MCF 10A (cell line): ENCODE measurements at regions of chr6 and their contacts with region 1.

Region 1: GRCh38 chr6:83067448-83068413 is at the start of gene DOP1A:
- DNase-seq: peak; percentile 95
- H3K4me3 Mint-ChIP-seq: peak within 1 kb of the TSS; percentile 85
- H3K27ac Mint-ChIP-seq: peak within 1 kb of the TSS; percentile 17
- H3K4me1 Mint-ChIP-seq: peaks cover 22% of the 10 kb centered on the region
- H3K27me3 Mint-ChIP-seq: no peaks in the 10 kb centered on the region
- CTCF ChIP-seq: peak; percentile 94
- total RNA-seq, gene DOP1A: 25.8 and 31.3 TPM in 2 replicates

Region 2: GRCh38 chr6:82270881-82271645 is 796.7 kb before region 1 on chr6:
- CTCF ChIA-PET with region 1: interaction called, 37 read pairs
- POLR2A ChIA-PET with region 1: interaction called, 5 read pairs
- intact Hi-C with region 1: no loop called
- DNase-seq: peak; percentile 60
- H3K4me3 Mint-ChIP-seq: no peak overlapping the region
- H3K27ac Mint-ChIP-seq: no peak overlapping the region
- H3K4me1 Mint-ChIP-seq: peaks cover 9% of the 10 kb centered on the region
- H3K27me3 Mint-ChIP-seq: no peaks in the 10 kb centered on the region
- CTCF ChIP-seq: peak; percentile 55

Region 3: GRCh38 chr6:83051377-83052172 is 16.2 kb before region 1 on chr6:
- CTCF ChIA-PET with region 1: interaction called, 25 read pairs
- POLR2A ChIA-PET with region 1: interaction called, 5 read pairs
- intact Hi-C with region 1: no loop called
- DNase-seq: no peak
- H3K4me3 Mint-ChIP-seq: no peak overlapping the region
- H3K27ac Mint-ChIP-seq: no peak overlapping the region
- H3K4me1 Mint-ChIP-seq: no peaks in the 10 kb centered on the region
- H3K27me3 Mint-ChIP-seq: no peaks in the 10 kb centered on the region
- CTCF ChIP-seq: no peak

Region 4: GRCh38 chr6:83114164-83114563 is 46.4 kb after region 1 on chr6:
- CTCF ChIA-PET with region 1: interaction called, 96 read pairs
- POLR2A ChIA-PET with region 1: interaction called, 15 read pairs
- intact Hi-C with region 1: loop called (anchors 2 kb)
- DNase-seq: peak; percentile 43
- H3K4me3 Mint-ChIP-seq: no peak overlapping the region
- H3K27ac Mint-ChIP-seq: peak overlapping the region; percentile 47
- H3K4me1 Mint-ChIP-seq: peaks cover 6% of the 10 kb centered on the region
- H3K27me3 Mint-ChIP-seq: no peaks in the 10 kb centered on the region
- CTCF ChIP-seq: no peak

Region 5: DNA sequence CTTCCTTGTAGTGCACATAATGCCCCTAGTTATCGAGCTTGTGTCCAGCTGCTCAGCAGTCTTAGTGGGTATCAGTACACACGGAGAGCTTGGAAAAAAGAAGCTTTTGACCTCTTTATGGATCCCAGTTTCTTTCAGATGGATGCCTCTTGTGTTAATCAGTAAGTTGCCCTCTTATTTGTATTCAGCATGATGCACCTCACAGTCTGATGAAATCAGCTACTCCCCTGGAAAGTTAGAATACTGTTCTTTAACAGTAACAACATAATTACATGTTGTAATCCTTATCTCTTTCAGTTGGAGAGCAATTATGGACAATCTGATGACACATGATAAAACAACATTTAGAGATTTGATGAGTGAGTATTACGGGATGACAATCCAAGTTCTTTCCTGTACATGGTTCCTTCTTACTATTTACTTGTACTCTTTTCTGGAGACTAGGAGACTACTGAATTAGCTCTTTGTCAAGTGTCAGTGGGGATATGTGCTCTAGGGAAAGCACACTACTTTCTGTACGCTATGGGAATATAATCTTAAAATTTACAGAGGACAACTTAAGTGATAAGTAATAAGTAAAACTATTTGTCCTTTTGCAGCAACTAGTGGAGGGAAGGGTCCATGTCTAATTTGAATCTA is 86.3 kb after region 1 on chr6:
- CTCF ChIA-PET with region 1: interaction called, 21 read pairs
- POLR2A ChIA-PET with region 1: interaction called, 7 read pairs
- intact Hi-C with region 1: no loop called
- DNase-seq: no peak
- H3K4me3 Mint-ChIP-seq: no peak overlapping the region
- H3K27ac Mint-ChIP-seq: no peak overlapping the region
- H3K4me1 Mint-ChIP-seq: no peaks in the 10 kb centered on the region
- H3K27me3 Mint-ChIP-seq: no peaks in the 10 kb centered on the region
- CTCF ChIP-seq: no peak

Region 6: DNA sequence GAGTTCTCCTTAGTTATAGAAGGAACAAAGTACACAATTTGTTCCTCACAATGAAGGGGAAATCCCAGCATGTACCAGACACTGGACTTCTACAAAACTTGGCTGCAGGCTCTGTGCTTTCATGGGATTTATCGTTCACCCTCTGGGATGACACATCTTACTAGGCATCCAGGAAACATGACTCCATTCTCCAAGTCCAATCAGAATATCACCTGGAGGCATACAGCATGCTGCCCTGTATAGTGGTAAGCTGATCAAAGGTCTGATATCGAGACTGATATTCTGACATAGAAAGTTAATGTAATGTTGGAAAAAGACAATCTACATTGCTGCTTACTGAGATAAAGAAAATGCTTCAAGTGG is 132.1 kb after region 1 on chr6:
- CTCF ChIA-PET with region 1: interaction called, 68 read pairs
- POLR2A ChIA-PET with region 1: interaction called, 27 read pairs
- intact Hi-C with region 1: no loop called
- DNase-seq: peak; percentile 72
- H3K4me3 Mint-ChIP-seq: no peak overlapping the region
- H3K27ac Mint-ChIP-seq: peak overlapping the region; percentile 3
- H3K4me1 Mint-ChIP-seq: peaks cover 8% of the 10 kb centered on the region
- H3K27me3 Mint-ChIP-seq: no peaks in the 10 kb centered on the region
- CTCF ChIP-seq: no peak

Region 7: GRCh38 chr6:83505356-83505755 is 437.6 kb after region 1 on chr6:
- CTCF ChIA-PET with region 1: interaction called, 10 read pairs
- POLR2A ChIA-PET with region 1: no interaction called
- intact Hi-C with region 1: no loop called
- DNase-seq: no peak
- H3K4me3 Mint-ChIP-seq: no peak overlapping the region
- H3K27ac Mint-ChIP-seq: no peak overlapping the region
- H3K4me1 Mint-ChIP-seq: no peaks in the 10 kb centered on the region
- H3K27me3 Mint-ChIP-seq: no peaks in the 10 kb centered on the region
- CTCF ChIP-seq: no peak